ENCODE measurements at regions of chr3 and their contacts with region 1.

Region 1: DNA sequence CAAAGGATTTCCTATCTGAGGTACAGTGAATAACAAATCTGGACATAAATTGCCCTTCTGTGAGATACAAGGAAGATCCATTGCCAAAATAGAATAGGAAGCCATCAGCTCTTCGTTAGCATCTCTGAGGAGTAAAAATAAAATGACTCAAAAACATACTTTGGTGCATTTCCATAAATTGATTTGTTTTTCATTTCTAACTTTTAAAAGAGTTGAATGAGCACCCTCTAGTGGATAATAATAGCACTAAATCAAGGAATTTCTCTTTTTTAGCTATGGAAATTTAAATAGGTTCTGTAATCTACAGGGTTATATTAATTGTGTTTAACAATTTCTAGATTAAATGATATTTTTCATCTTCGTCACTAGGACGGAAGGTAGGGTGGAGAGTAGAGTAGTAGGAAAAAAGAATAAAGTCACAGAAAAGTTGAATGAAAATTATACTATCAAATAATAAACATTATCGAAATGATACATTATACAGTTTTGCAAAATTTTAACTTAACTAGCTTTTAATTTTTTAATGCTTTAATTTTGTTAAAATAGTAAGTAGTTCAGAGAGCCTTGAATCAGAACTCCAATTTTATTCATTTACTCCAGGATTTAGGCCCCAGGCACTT is 6.4 kb downstream of the NSUN3 start:
- DNase-seq: no peak
- H3K4me3 ChIP-seq: no peak overlapping the region
- CTCF ChIP-seq: peak; percentile 5

Region 2: GRCh38 chr3:94004301-94004910 is 64.9 kb before region 1 on chr3:
- CTCF ChIA-PET with region 1: interaction called, 216 read pairs
- POLR2A ChIA-PET with region 1: no interaction called
- DNase-seq: peak; percentile 58
- H3K4me3 ChIP-seq: no peak overlapping the region; the same call in 1 of the 2 replicates
- CTCF ChIP-seq: peak; percentile 66

Region 3: GRCh38 chr3:94011233-94011711 is 58.0 kb before region 1 on chr3:
- CTCF ChIA-PET with region 1: interaction called, 216 read pairs
- POLR2A ChIA-PET with region 1: no interaction called
- DNase-seq: no peak
- H3K4me3 ChIP-seq: no peak overlapping the region
- CTCF ChIP-seq: no peak

Region 4: DNA sequence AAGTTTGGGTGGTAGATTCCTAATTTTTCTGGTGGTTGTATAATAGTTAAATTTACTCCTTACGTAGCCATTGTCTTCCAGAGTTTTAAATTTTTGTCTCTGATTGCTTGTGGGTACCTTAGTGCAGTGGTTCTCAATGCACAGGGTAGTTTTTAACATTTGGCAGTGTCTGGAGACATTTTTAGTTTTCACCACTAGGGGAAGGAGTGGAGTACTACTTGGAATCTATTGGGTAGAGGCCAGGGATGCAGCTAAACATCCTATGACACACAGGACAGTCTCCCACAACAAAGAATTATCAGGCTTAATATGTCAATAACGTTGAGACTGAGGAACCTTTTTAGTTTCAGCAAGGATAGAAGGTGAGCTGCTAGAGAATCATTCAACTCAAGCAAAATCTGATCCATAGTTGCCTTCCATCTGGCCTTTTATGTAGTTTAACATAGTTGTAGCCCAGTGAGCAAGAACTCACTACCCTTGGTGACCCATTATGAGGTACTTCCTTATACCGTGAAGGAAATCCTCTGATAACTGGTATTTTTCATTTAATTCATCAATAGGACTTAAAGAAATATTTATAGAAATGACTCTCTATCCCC is 32.3 kb before region 1 on chr3:
- CTCF ChIA-PET with region 1: interaction called, 10 read pairs
- POLR2A ChIA-PET with region 1: no interaction called
- DNase-seq: no peak
- H3K4me3 ChIP-seq: no peak overlapping the region
- CTCF ChIP-seq: peak; percentile 43

Region 5: GRCh38 chr3:94049267-94049666 is 20.0 kb before region 1 on chr3:
- CTCF ChIA-PET with region 1: interaction called, 12 read pairs
- POLR2A ChIA-PET with region 1: no interaction called
- DNase-seq: no peak
- H3K4me3 ChIP-seq: no peak overlapping the region
- CTCF ChIP-seq: no peak

Region 6: GRCh38 chr3:94083261-94083660 is 14.0 kb after region 1 on chr3:
- CTCF ChIA-PET with region 1: interaction called, 28 read pairs
- POLR2A ChIA-PET with region 1: no interaction called
- DNase-seq: no peak
- H3K4me3 ChIP-seq: no peak overlapping the region
- CTCF ChIP-seq: no peak